A549 (cell line): ENCODE measurements at regions of chr9 and their contacts with region 1.

Region 1: GRCh38 chr9:104927912-104928740 is at the start of gene ABCA1:
- DNase-seq: peak; percentile 79
- ATAC-seq: peak; percentile 62 to 67
- H3K4me3 ChIP-seq: peak within 1 kb of the TSS; percentile 73
- H3K27ac ChIP-seq: peak within 1 kb of the TSS; percentile 76 to 91
- H3K4me1 ChIP-seq: peaks cover 6% of the 10 kb centered on the region; the same call in 2 of the 3 replicates
- CTCF ChIP-seq: no peak
- EP300 ChIP-seq: no peak
- POLR2A ChIP-seq: 0 out of 2 replicates have a peak, but pooled peaks have one; percentile 13
- RAD21 ChIP-seq: 0 out of 5 replicates have a peak, but pooled peaks of 1 of the 2 experiments have one; percentile 23
- polyA plus RNA-seq, gene ABCA1: 12.0 and 15.5 TPM in 2 replicates

Region 2: DNA sequence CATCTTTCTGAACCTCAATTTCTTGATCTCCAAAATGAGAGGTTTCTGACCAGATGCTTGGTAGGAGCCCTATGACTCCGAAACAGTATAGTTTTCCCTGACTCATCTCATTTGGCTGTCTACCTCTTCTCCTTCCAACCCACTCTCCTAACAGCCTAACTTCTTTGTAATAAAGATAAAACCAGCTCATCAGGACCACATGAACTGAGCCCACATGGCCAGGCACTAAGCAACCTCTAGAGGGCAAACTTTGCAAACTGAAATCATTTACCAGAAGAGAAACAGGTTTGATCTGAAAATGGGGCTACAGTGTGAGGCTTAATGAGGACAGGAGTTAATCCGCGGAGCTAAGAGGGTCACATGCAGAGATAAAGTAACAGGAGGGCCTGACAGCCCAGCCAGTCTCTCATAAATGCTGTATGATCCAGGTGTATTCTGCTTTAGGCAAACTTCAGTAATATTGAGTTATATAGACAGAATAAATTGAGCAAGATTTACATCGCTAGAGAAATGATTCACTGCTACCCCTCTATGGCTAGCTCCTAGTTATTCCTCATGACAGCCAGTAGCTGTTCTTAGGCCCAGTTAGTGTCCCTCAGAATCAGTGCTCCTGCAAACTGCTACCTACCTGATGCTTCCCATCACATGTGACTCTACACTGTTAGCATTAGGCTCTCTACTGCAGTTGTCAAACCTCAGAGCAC is 64.8 kb before region 1 on chr9:
- CTCF ChIA-PET with region 1: interaction called, 27 read pairs
- POLR2A ChIA-PET with region 1: interaction called, 6 read pairs
- DNase-seq: peak; percentile 68 to 75
- ATAC-seq: peak; percentile 84 to 94
- H3K4me3 ChIP-seq: no peak overlapping the region
- H3K27ac ChIP-seq: peak overlapping the region; percentile 28 to 53; a peak in 5 of 6 replicates
- H3K4me1 ChIP-seq: peaks cover 27% of the 10 kb centered on the region
- CTCF ChIP-seq: peak; percentile 80
- EP300 ChIP-seq: no peak
- POLR2A ChIP-seq: no peak
- RAD21 ChIP-seq: peak; percentile 84 to 89

Region 3: GRCh38 chr9:104968025-104968982 is 40.2 kb after region 1 on chr9:
- CTCF ChIA-PET with region 1: interaction called, 11 read pairs
- POLR2A ChIA-PET with region 1: interaction called, 88 read pairs
- DNase-seq: peak; percentile 76 to 86
- ATAC-seq: peak; percentile 98 to 99
- H3K4me3 ChIP-seq: peak overlapping the region; percentile 56
- H3K27ac ChIP-seq: peak overlapping the region; percentile 94 to 98
- H3K4me1 ChIP-seq: peaks cover 6% of the 10 kb centered on the region; the same call in 2 of the 3 replicates
- CTCF ChIP-seq: no peak
- EP300 ChIP-seq: no peak; a peak in 1 of 5 replicates
- POLR2A ChIP-seq: peak; percentile 89
- RAD21 ChIP-seq: peak in 1 of 2 experiments; percentile 27; a peak in 2 of 5 replicates

Region 4: GRCh38 chr9:105064315-105065097 is 136.4 kb after region 1 on chr9:
- CTCF ChIA-PET with region 1: interaction called, 17 read pairs
- POLR2A ChIA-PET with region 1: interaction called, 72 read pairs
- DNase-seq: peak; percentile 89 to 96
- ATAC-seq: peak; percentile 90 to 95
- H3K4me3 ChIP-seq: peak overlapping the region; percentile 12; the same call in 1 of the 3 replicates
- H3K27ac ChIP-seq: peak overlapping the region; percentile 88 to 93
- H3K4me1 ChIP-seq: peaks cover 41% of the 10 kb centered on the region
- CTCF ChIP-seq: no peak
- EP300 ChIP-seq: peak; percentile 81 to 87; a peak in 4 of 5 replicates
- POLR2A ChIP-seq: no peak
- RAD21 ChIP-seq: peak in 1 of 2 experiments; percentile 66; a peak in 3 of 5 replicates

Region 5: DNA sequence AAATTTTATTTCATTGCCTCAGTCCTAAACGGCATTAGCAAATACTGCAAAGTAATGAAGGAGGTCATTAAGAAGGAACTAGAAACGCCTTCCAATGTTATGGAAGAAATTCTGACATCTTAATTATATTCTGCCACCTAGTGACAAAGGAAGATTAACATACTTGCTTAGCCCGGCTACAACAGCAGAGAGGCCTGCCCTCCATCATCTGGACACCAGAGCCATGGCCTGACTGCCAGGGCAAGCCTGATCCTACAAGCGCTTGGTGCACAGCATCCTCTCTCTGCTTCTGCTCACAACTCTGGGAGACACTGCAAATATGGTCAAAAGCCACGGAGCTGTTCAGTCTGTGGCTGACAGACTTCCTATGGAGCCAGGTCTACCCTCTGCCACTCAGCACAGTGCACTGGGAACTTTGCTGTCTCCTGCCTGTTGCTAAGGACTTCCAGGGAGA is 229.0 kb after region 1 on chr9:
- CTCF ChIA-PET with region 1: interaction called, 25 read pairs
- POLR2A ChIA-PET with region 1: interaction called, 4 read pairs
- DNase-seq: peak; percentile 78 to 80
- ATAC-seq: peak; percentile 93 to 95
- H3K4me3 ChIP-seq: no peak overlapping the region
- H3K27ac ChIP-seq: peak overlapping the region; percentile 38 to 74; a peak in 5 of 6 replicates
- H3K4me1 ChIP-seq: peaks cover 36% of the 10 kb centered on the region
- CTCF ChIP-seq: peak; percentile 75
- EP300 ChIP-seq: no peak
- POLR2A ChIP-seq: no peak
- RAD21 ChIP-seq: peak; percentile 85 to 93